ENCODE measurements at regions of chr10 and their contacts with region 1.

Region 1: DNA sequence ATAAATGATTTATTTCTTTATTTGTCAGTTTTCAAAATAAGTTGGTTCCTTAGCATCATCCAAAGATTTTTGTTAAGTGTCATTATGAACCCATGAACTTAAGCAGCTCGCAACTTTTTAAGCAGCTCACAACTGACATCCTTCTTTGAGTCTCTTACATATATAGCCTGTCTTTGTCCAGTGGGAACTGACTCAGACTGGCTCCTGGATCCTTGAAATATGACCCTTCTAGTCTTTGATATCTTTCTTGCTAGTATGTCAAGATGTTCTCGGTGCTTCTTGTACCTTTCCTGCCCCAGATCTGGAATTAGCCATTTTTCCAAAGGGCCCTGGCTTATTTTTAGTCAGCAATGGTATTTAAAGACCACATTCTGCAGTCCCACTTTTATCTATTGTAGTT is 53.9 kb upstream of the ARID5B start:
- DNase-seq: no peak
- H3K4me3 ChIP-seq: no peak overlapping the region
- H3K4me3 Mint-ChIP-seq: no peak overlapping the region
- H3K27ac ChIP-seq: no peak overlapping the region
- H3K27ac Mint-ChIP-seq: no peak overlapping the region
- H3K4me1 ChIP-seq: no peaks in the 10 kb centered on the region
- H3K4me1 Mint-ChIP-seq: peaks cover 0 to 11% (median 5%) of the 10 kb centered on the region in 4 donors
- H3K27me3 ChIP-seq: no peaks in the 10 kb centered on the region
- H3K27me3 Mint-ChIP-seq: no peaks in the 10 kb centered on the region

Region 2: GRCh38 chr10:61835069-61835945 is 12.3 kb before region 1 on chr10:
- CTCF ChIA-PET with region 1: interaction called, 3 read pairs
- POLR2A ChIA-PET with region 1: no interaction called
- intact Hi-C with region 1: loop called (anchors 1 kb)
- DNase-seq: peak in 4 of 5 donors; percentile 8 to 15 (median 10)
- H3K4me3 ChIP-seq: no peak overlapping the region
- H3K4me3 Mint-ChIP-seq: peak overlapping the region in 2 of 8 donors; percentile 18 to 50
- H3K27ac ChIP-seq: no peak overlapping the region
- H3K27ac Mint-ChIP-seq: no peak overlapping the region
- H3K4me1 ChIP-seq: peaks cover 15% of the 10 kb centered on the region
- H3K4me1 Mint-ChIP-seq: peaks cover 4 to 14% (median 12%) of the 10 kb centered on the region in 4 donors
- H3K27me3 ChIP-seq: no peaks in the 10 kb centered on the region
- H3K27me3 Mint-ChIP-seq: peaks cover 0 to 2% of the 10 kb centered on the region in 2 donors

Measured in CD4-positive, alpha-beta memory T cell (primary cell).